IMR-90 (cell line): ENCODE measurements at regions of chr22 and their contacts with region 1.

Region 1: GRCh38 chr22:23402275-23403151 is 177.6 kb downstream of the IGLL1 start:
- DNase-seq: peak; percentile 19
- ATAC-seq: peak; percentile 65
- H3K4me3 ChIP-seq: no peak overlapping the region
- H3K27ac ChIP-seq: no peak overlapping the region
- H3K4me1 ChIP-seq: peaks cover 4% of the 10 kb centered on the region; the same call in 1 of the 2 replicates
- H3K27me3 ChIP-seq: peaks cover 1% of the 10 kb centered on the region; the same call in 1 of the 2 replicates
- CTCF ChIP-seq: peak; percentile 49
- POLR2A ChIP-seq: no peak
- RAD21 ChIP-seq: peak; percentile 37

Region 2: DNA sequence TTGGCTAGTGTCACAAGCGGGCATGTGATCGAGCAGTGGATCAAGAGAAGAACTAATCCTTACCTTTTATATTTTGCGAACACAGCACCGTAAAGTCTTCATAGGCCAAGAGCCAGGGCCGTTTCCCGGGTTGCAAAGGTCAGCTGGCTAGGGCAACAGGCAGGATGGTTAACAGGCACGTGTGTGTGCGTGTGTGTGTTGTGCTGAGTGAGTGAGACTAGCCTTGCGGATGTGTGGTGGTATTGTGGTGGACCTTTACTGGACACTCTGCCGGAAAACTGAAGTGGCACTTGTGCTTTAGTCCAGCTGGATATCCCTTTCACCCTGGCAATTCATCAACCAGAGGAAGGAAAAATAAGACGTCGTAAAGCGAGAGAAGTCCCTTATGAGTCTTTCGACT is 45.5 kb before region 1 on chr22:
- CTCF ChIA-PET with region 1: no interaction called
- POLR2A ChIA-PET with region 1: no interaction called
- dilution Hi-C with region 1: no loop called
- in situ Hi-C with region 1: no loop called
- intact Hi-C with region 1: no loop called
- DNase-seq: no peak
- ATAC-seq: no peak
- H3K4me3 ChIP-seq: no peak overlapping the region
- H3K27ac ChIP-seq: no peak overlapping the region
- H3K4me1 ChIP-seq: no peaks in the 10 kb centered on the region
- H3K27me3 ChIP-seq: peaks cover 19% of the 10 kb centered on the region
- CTCF ChIP-seq: no peak
- POLR2A ChIP-seq: no peak
- RAD21 ChIP-seq: no peak

Region 3: GRCh38 chr22:23521441-23522113 is 119.1 kb after region 1 on chr22:
- CTCF ChIA-PET with region 1: no interaction called
- POLR2A ChIA-PET with region 1: no interaction called
- dilution Hi-C with region 1: no loop called
- in situ Hi-C with region 1: no loop called
- intact Hi-C with region 1: loop called (anchors 5 kb)
- DNase-seq: peak; percentile 75
- ATAC-seq: peak; percentile 95
- H3K4me3 ChIP-seq: peak overlapping the region; percentile 28
- H3K27ac ChIP-seq: peak overlapping the region; percentile 83
- H3K4me1 ChIP-seq: peaks cover 9% of the 10 kb centered on the region
- H3K27me3 ChIP-seq: no peaks in the 10 kb centered on the region
- CTCF ChIP-seq: peak; percentile 16; the same call in 1 of the 2 replicates
- POLR2A ChIP-seq: peak; percentile 67; the same call in 1 of the 2 replicates
- RAD21 ChIP-seq: no peak